ENCODE measurements at regions of chr19 and their contacts with region 1.

Region 1: DNA sequence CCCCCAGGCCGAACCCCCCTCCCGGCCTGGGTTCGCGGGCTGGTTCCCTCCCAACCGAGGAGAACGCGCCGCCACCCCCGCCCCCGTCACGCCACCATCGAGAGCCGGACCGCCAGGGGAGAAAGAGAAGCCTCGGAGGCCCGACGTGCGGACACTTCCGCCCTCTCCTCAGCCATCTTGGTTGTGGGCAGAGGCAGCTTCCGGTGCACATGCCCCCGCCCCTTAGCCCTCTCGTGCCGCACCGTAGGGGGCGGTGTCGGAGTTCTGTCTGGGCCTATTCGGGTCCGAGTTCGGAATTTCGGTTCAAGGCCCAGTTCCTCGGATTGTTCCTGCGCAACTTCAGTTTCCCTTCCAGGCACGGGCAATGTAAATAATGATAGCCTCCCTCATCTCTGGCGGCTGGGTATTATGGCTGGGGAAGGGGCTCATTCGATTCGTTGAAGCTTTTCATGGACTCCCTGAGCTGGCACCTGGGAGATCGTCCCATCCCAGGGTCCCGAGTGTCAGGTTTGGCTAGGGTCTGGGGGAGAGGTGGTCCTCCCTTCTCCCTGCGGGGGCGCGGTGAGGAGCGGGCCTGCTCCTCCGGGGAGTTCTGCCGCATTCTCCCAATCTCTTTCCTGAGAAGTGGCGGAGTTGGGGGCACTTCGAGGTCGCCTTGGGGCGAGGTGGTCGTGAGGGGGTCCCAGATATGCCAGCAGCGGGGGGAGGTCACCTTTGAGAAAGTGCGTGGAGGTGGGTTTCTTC is at the starts of genes IER2 and STX10:
- DNase-seq: peak in 1 of 2 donors; percentile 98
- H3K4me3 ChIP-seq: peak within 1 kb of the TSS; percentile 82 to 91
- H3K27ac ChIP-seq: peak within 1 kb of the TSS; percentile 98
- H3K4me1 ChIP-seq: peaks cover 23% of the 10 kb centered on the region
- H3K27me3 ChIP-seq: no peaks in the 10 kb centered on the region
- CTCF ChIP-seq: peak; percentile 53 to 59 (median 54)
- POLR2A ChIP-seq: peak in 1 of 2 donors; percentile 91
- total RNA-seq, gene IER2: 152 TPM
- total RNA-seq, gene STX10: 71.5 TPM

Region 2: DNA sequence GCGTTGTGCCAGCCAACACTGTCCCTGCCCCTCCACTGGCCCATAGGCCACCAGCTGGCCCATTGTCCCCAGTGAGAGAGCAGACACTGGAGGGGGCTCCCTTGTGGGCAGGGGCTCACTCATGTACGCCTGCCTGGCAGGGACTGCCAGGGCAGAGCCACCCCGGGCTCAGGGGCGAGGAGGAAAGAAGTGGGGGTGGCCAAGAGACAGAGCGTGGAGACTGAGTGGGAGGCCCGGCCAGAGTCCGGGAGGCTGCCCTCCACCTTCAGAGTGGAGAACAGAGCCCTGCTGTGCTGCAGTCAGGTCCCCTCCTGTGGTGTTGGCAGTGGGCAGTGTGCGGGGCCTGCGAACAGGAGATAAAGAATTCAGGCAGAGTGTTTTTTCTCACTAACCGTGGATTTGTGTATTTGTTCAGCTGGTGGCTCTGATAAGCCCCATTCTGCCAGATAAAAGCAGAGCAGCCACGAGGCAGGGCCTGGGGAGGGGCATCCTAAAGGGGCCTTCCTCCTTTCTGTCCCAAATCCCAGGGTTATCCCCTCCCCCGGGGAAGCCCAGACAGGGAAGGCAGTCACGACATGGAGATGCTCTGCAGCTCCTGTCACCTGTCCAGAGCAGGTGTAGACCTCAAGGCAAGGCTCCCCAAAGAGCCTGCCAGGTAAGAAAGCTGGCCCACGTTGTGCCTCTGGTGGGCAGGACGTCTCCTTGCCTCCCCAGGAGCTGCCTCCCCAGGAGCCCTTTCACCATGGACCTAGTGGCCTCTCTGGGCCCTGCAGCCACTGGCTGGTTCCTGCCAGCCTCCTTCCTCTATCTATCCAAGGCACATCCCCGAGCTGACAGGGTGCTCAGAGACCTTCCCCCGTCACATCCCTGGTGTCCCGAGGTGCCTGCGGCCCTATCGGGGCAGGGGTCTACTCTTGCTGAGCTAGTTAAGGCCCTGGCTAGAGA is 80.7 kb before region 1 on chr19:
- intact Hi-C with region 1: no loop called
- DNase-seq: no peak
- H3K4me3 ChIP-seq: no peak overlapping the region
- H3K27ac ChIP-seq: peak overlapping the region; percentile 96
- H3K4me1 ChIP-seq: peaks cover 94% of the 10 kb centered on the region
- H3K27me3 ChIP-seq: no peaks in the 10 kb centered on the region
- CTCF ChIP-seq: no peak
- POLR2A ChIP-seq: no peak

Region 3: GRCh38 chr19:13104360-13104847 is 46.0 kb before region 1 on chr19:
- intact Hi-C with region 1: loop called (anchors 5 kb)
- DNase-seq: peak in 1 of 2 donors; percentile 84
- H3K4me3 ChIP-seq: peak overlapping the region in 1 of 2 donors; percentile 18
- H3K27ac ChIP-seq: peak overlapping the region; percentile 28
- H3K4me1 ChIP-seq: peaks cover 47% of the 10 kb centered on the region
- H3K27me3 ChIP-seq: no peaks in the 10 kb centered on the region
- CTCF ChIP-seq: peak; percentile 32 to 70 (median 33)
- POLR2A ChIP-seq: no peak

Region 4: DNA sequence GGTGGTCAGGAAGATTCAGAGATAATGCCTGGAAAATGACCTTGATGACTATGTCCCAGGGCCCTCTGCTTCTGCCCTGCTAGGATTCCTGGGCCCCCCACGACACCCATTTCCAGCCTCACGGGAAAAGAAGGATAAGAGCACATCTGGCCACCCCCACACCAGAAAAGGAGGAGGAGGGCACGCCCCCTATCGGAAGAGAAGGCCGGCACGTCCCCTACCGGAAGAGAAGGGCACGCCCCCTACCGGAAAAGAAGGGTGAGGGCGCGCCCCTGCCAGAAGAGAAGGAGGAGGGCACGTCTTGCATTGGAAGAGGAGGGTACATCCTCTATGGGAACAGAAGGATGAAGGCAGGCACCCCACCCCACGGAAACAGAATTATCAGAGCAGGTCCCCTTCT is 84.2 kb after region 1 on chr19:
- intact Hi-C with region 1: loop called (anchors 10 kb)
- DNase-seq: no peak
- H3K4me3 ChIP-seq: no peak overlapping the region
- H3K27ac ChIP-seq: no peak overlapping the region
- H3K4me1 ChIP-seq: no peaks in the 10 kb centered on the region
- H3K27me3 ChIP-seq: no peaks in the 10 kb centered on the region
- CTCF ChIP-seq: peak in 1 of 3 experiments; percentile 40
- POLR2A ChIP-seq: no peak

Region 5: GRCh38 chr19:13846557-13847406 is 696.4 kb after region 1 on chr19:
- intact Hi-C with region 1: loop called (anchors 10 kb)
- DNase-seq: peak in 1 of 2 donors; percentile 97
- H3K4me3 ChIP-seq: peak overlapping the region; percentile 54 to 67
- H3K27ac ChIP-seq: peak overlapping the region; percentile 100
- H3K4me1 ChIP-seq: peaks cover 84% of the 10 kb centered on the region
- H3K27me3 ChIP-seq: no peaks in the 10 kb centered on the region
- CTCF ChIP-seq: no peak
- POLR2A ChIP-seq: no peak

Measured in vagina (tissue), 2 donors.